Tibial artery (tissue), 4 donors: ENCODE measurements at regions of chr1 and their contacts with region 1.

Region 1: GRCh38 chr1:34162852-34163766 is 1.9 kb downstream of the CSMD2 start:
- DNase-seq: peak; percentile 72 to 83
- H3K4me3 ChIP-seq: peak overlapping the region; percentile 35 to 53
- H3K27ac ChIP-seq: no peak overlapping the region
- H3K4me1 ChIP-seq: peaks cover 6 to 46% (median 42%) of the 10 kb centered on the region in 4 donors
- H3K27me3 ChIP-seq: peaks cover 3 to 51% of the 10 kb centered on the region in 2 donors
- CTCF ChIP-seq: peak; percentile 67 to 84

Region 2: DNA sequence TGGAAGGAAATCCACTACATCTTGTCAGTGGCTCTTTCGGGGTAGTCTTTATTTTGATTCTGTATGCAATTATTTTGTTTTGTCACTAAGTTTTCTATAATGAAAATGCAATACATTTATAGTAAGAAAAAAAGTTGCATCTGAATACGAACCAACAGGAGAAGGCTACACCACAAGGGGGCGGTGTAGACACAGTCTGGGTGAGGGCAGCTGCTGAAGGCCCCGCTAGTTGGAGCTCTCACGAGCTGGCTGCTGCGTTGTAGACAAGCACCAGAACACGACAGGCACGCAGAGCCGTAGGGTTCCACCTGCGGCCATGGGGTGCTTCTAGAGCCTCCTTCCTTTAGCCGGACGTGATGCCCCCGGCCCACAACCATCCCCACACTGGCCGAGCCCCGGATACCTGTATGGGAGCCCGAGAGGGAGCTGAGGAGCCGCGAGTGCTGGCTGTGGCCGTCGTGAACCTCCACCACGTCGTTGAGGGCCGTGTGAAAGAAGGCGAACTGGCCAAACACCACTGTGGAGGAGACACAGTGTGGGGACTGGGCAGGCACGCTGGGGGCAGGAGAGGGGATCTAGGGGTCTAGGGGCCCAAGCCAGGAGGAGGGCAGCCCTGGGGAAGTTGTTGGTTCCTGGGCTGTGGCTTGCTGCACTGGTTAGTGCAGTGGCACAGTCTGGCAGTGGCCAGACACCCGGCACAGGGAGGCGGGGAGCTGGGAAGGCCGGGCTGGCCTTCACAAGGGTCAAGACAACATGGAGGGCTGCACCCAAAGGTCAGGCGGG is 529.9 kb before region 1 on chr1:
- intact Hi-C with region 1: loop called (anchors 5 kb)
- DNase-seq: peak; percentile 91 to 93
- H3K4me3 ChIP-seq: no peak overlapping the region
- H3K27ac ChIP-seq: no peak overlapping the region
- H3K4me1 ChIP-seq: no peaks in the 10 kb centered on the region
- H3K27me3 ChIP-seq: peaks cover 0 to 4% of the 10 kb centered on the region in 2 donors
- CTCF ChIP-seq: peak; percentile 82 to 97

Region 3: DNA sequence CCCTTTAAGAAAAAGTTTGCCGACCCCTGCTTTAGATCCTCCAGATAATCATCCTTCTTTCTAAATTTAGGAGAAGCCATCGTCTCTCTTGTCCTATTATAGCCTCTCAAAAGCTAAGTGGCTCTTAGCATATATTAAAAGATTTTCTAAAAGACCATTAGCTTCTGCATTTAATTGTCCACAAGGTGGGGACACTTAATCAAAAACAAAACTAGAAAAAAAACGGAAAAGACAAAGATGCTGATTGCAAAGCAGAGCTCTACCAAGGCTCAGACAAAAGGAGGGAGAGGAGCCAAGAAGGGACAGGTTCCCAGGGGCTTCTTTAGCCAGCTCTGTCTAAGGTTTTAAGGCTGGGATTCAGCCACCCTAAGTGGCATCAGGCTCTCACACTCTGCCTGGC is 427.5 kb before region 1 on chr1:
- intact Hi-C with region 1: loop called (anchors 10 kb)
- DNase-seq: no peak
- H3K4me3 ChIP-seq: no peak overlapping the region
- H3K27ac ChIP-seq: no peak overlapping the region
- H3K4me1 ChIP-seq: no peaks in the 10 kb centered on the region
- H3K27me3 ChIP-seq: peaks cover 0 to 22% of the 10 kb centered on the region in 2 donors
- CTCF ChIP-seq: peak; percentile 44 to 59

Region 4: GRCh38 chr1:33797849-33798248 is 365.3 kb before region 1 on chr1:
- intact Hi-C with region 1: no loop called
- DNase-seq: no peak
- H3K4me3 ChIP-seq: no peak overlapping the region
- H3K27ac ChIP-seq: no peak overlapping the region
- H3K4me1 ChIP-seq: no peaks in the 10 kb centered on the region
- H3K27me3 ChIP-seq: no peaks in the 10 kb centered on the region
- CTCF ChIP-seq: no peak

Region 5: DNA sequence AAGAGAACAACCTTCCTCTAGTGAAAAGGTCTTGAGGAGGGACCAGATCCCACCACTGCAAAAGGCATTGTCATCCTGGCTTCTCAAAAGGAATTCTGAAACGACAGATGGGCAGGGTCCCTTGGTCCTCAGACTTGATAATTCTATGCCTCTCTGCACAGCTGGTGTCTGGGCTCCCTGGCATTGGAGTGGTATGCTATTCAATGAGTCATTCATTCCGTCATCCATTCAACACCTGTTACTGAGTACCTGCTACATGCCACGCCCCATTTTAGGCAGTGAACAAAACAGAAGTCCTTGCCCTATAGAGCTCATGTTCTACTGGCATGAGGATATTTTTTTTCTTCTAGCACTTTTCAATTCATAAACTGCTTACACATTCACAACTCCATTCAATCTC is 345.0 kb before region 1 on chr1:
- intact Hi-C with region 1: no loop called
- DNase-seq: no peak
- H3K4me3 ChIP-seq: no peak overlapping the region
- H3K27ac ChIP-seq: no peak overlapping the region
- H3K4me1 ChIP-seq: no peaks in the 10 kb centered on the region
- H3K27me3 ChIP-seq: peaks cover 0 to 4% of the 10 kb centered on the region in 2 donors
- CTCF ChIP-seq: no peak

Region 6: DNA sequence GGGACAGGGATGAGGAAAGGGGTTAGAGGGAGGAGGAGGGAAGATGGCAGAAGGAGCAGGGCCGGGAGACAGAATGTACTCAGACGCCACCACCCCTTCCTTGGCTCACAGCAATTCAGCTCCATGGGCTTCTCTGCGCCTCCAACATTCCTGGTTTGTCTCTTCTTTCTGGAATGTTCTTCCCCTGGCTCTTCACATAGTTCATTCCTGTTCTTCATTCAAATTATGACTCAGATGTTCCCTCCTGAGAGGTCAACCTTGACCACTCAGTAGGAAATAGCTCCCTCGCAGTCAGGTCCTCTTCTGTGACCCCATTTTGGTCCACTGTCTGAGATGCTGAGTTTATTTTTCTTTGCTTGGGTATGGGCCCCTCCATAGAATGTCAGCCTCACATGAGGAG is 216.8 kb after region 1 on chr1:
- intact Hi-C with region 1: no loop called
- DNase-seq: no peak
- H3K4me3 ChIP-seq: no peak overlapping the region
- H3K27ac ChIP-seq: no peak overlapping the region
- H3K4me1 ChIP-seq: no peaks in the 10 kb centered on the region
- H3K27me3 ChIP-seq: peaks cover 0 to 39% of the 10 kb centered on the region in 2 donors
- CTCF ChIP-seq: no peak